PC-3 (cell line): ENCODE measurements at regions of chr18 and their contacts with region 1.

Region 1: GRCh38 chr18:8264861-8265411 is 344.3 kb upstream of the RAB12 start:
- DNase-seq: no peak
- ATAC-seq: no peak
- H3K4me3 ChIP-seq: no peak overlapping the region
- H3K27ac ChIP-seq: no peak overlapping the region
- H3K4me1 ChIP-seq: peaks cover 3% of the 10 kb centered on the region
- H3K27me3 ChIP-seq: no peaks in the 10 kb centered on the region
- CTCF ChIP-seq: no peak

Region 2: DNA sequence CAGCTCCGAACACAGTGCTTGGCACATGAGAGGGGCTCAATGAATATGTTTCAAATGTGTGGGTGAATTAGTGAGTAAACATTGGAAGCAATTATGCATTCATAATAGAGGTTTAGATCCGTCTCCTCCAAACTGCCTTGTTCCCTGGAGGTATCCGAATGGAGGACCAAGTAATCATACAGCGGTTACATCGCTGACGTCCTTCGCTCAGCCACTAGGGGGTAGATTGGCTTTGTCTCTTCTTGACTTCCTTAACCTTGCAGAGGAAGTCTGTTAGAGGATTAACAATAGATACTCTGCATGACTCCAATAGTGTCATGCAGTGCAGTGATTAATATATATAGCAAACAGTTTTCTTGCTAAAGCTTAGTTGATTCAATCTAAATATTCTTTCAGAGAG is 180.8 kb before region 1 on chr18:
- CTCF ChIA-PET with region 1: interaction called, 10 read pairs
- POLR2A ChIA-PET with region 1: no interaction called
- intact Hi-C with region 1: no loop called
- DNase-seq: peak; percentile 82
- ATAC-seq: peak; percentile 97
- H3K4me3 ChIP-seq: no peak overlapping the region
- H3K27ac ChIP-seq: no peak overlapping the region
- H3K4me1 ChIP-seq: peaks cover 4% of the 10 kb centered on the region; the same call in 1 of the 2 replicates
- H3K27me3 ChIP-seq: no peaks in the 10 kb centered on the region
- CTCF ChIP-seq: peak; percentile 93